Mucosa of descending colon (tissue), 3 donors: ENCODE measurements at regions of chr11 and their contacts with region 1.

Region 1: GRCh38 chr11:86919557-86920210 is 35.5 kb downstream of the FZD4 start:
- DNase-seq: peak in 1 of 3 donors; percentile 36
- ATAC-seq: peak; percentile 44
- H3K4me3 ChIP-seq: no peak overlapping the region
- H3K4me1 ChIP-seq: peaks cover 8% of the 10 kb centered on the region
- CTCF ChIP-seq: peak; percentile 20

Region 2: DNA sequence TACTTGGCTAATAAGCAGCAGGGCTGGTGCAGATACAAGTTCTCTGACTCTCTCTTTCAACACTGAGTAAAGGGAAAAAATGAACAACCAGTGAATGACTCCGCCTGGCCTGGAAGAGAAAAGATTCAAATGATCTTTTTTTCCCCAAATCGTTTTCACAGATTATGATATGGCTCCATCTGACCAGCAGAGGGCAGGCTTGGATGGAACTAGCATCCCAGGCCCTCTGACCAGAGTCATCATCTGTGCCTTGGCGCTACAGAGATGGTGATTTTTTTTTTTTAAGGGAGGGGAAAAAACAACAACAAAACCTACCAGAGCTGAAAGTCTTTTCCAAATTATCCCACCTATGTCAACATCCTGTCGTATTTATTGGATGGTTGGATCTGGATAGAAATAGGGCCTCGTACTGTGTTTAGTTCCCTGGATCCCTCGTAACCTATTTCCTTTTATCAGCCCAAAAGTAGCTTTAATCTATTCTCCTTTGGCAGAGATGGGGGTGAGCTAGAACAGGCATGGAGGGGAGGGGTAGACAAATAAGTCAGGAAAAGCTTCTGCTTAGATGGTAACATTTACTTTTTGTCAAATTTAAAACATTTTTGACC is 49.6 kb before region 1 on chr11:
- intact Hi-C with region 1: loop called (anchors 5 kb)
- DNase-seq: peak in 2 of 3 donors; percentile 39 to 70
- ATAC-seq: peak; percentile 76
- H3K4me3 ChIP-seq: no peak overlapping the region
- H3K4me1 ChIP-seq: no peaks in the 10 kb centered on the region
- CTCF ChIP-seq: peak; percentile 32